OCI-LY7 (cell line): ENCODE measurements at regions of chr16 and their contacts with region 1.

Region 1: GRCh38 chr16:66934153-66934838 is at the start of gene CIAO2B:
- DNase-seq: peak; percentile 88
- H3K4me3 ChIP-seq: peak within 1 kb of the TSS; percentile 88
- H3K27ac ChIP-seq: peak within 1 kb of the TSS; percentile 34
- H3K4me1 ChIP-seq: peaks cover 12% of the 10 kb centered on the region
- CTCF ChIP-seq: no peak
- total RNA-seq, gene CIAO2B: 132 and 133 TPM in 2 replicates

Region 2: GRCh38 chr16:66894948-66895688 is 39.2 kb before region 1 on chr16:
- CTCF ChIA-PET with region 1: no interaction called
- POLR2A ChIA-PET with region 1: no interaction called
- intact Hi-C with region 1: loop called (anchors 5 kb)
- DNase-seq: peak; percentile 63
- H3K4me3 ChIP-seq: no peak overlapping the region
- H3K27ac ChIP-seq: no peak overlapping the region
- H3K4me1 ChIP-seq: no peaks in the 10 kb centered on the region
- CTCF ChIP-seq: peak; percentile 90

Region 3: DNA sequence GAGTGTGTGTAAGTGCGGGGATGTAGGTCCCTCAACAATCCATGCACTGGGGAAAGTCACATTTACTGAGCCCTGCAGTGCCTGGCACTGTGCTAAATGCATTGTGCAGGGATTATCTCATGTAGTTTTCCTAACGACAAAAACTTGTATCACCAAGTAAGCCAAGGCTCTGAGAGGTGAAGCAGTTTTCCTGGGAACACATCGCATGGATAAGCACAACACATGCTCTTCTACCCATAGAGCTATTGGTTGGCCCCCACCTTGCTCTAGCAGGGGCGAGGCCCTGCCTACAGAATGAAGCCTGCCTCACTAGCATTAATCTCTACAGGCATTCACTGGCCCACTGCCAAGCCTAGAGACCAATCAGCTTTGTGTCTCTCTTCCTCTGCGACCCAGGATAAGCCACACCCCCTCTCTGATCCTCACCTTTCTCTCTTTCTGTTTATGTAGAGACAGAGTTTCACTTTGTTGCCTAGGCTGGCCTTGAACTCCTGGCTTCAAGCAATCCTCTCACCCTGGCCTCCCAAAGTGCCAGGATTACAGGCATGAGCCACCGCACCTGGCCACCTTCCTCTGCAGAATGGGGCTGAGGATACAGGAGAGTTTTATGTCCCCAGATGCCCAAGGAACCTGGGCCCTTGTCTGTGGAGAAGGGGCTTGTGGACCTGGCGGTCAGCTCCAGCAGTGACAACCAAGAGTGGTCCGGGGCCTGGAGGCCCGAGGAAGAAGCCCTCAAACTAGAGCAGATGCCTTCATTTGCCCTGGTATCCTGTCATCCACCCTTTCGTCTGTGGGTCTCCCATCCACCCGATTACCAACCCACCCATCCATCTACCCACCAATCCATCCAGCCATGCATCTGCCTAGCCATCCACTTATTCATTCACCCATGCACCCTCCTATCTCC is 28.4 kb before region 1 on chr16:
- CTCF ChIA-PET with region 1: no interaction called
- POLR2A ChIA-PET with region 1: no interaction called
- intact Hi-C with region 1: no loop called
- DNase-seq: peak; percentile 43
- H3K4me3 ChIP-seq: no peak overlapping the region
- H3K27ac ChIP-seq: no peak overlapping the region
- H3K4me1 ChIP-seq: no peaks in the 10 kb centered on the region
- CTCF ChIP-seq: no peak